Calu3 (cell line): ENCODE measurements at regions of chr1 and their contacts with region 1.

Region 1: GRCh38 chr1:25890239-25891034 is 14.9 kb upstream of the PAQR7 start:
- DNase-seq: peak; percentile 86
- H3K4me3 Mint-ChIP-seq: peak overlapping the region; percentile 36
- H3K27ac Mint-ChIP-seq: peak overlapping the region; percentile 91
- H3K4me1 Mint-ChIP-seq: peaks cover 29% of the 10 kb centered on the region
- H3K27me3 Mint-ChIP-seq: no peaks in the 10 kb centered on the region
- CTCF ChIP-seq: no peak

Region 2: GRCh38 chr1:25858906-25859789 is 31.3 kb before region 1 on chr1 and contains the start of gene AUNIP:
- CTCF ChIA-PET with region 1: no interaction called
- intact Hi-C with region 1: loop called (anchors 2 kb)
- DNase-seq: peak; percentile 87
- H3K4me3 Mint-ChIP-seq: peak within 1 kb of the TSS; percentile 100
- H3K27ac Mint-ChIP-seq: peak within 1 kb of the TSS; percentile 83
- H3K4me1 Mint-ChIP-seq: peaks cover 18% of the 10 kb centered on the region
- H3K27me3 Mint-ChIP-seq: no peaks in the 10 kb centered on the region
- CTCF ChIP-seq: no peak
- total RNA-seq, gene AUNIP: 7.7 and 10.6 TPM in 2 replicates